Right ventricle myocardium inferior (tissue), 1 donor: ENCODE measurements at regions of chr12 and their contacts with region 1.

Region 1: DNA sequence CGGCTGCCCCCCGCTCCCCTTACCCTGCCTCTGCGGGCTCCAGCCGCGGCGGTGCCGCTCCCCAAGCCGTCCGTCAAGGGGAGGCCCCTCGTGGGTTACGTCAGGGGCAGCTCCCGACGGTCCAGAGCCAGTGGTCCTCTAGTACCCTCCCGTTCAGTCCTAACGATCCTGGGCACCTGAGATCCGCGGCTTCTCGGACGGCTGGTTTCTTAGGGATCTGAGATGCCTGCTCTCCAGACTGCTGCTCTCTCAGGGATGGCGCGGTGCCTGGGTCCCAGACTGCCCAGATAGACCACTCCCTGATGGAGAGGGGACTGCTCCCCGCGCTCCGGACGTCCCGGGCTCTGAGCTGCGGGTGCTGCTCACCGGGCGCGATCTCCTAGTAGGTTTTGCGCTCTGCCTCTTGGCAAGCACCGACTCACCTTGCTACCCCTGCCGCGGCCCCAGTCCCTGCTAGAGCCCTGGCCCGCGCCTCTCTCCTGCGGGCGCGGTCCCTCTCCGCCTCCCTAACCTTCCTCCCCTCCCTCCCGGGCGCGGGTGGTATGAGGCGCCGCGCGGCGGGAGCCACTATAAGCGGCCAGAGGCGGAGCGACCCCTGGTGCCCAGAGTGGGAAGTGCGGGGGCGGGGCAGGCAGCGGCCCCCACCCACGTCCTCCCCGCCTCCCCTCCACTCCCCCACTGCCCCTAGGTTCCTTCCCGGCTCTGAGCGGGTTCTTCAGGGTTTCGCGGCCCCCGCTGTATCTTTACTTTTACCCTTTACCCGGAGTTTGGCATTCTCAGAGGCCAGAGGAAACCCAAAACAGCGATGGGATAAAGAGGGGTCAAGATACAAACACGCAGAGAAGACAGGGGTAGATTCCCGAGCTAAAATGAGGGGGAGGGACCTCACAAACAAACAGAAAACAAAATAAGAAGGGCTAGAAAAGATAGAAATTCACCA is at the start of gene C1QL4:
- DNase-seq: peak; percentile 92
- ATAC-seq: peak; percentile 81
- total RNA-seq, gene C1QL4: not detected

Region 2: DNA sequence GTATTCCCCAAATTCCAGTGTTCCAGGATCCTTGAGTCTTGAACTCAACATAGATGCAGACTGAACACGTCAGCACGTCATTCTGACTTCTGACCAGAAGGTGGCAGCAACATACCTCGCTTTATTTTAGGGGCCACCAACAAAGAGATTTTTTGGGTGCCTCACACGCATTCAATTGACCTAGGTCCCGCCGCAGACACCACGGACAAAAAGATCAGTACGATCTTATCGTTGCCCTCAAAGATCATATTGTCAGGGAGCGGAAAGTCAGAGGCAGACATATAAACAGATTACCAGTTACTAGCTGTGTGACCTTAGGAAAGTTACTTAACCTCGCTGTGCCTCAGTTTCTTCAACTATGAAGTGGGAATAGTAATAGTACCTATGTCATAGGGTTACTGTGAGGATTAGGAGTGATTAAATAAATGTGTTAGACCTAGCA is 48.5 kb before region 1 on chr12:
- intact Hi-C with region 1: loop called (anchors 2 kb)
- DNase-seq: no peak
- ATAC-seq: no peak